PC-9 (cell line): ENCODE measurements at regions of chr16 and their contacts with region 1.

Region 1: GRCh38 chr16:56789360-56789759 is 59.4 kb downstream of the NUP93 start:
- DNase-seq: peak; percentile 55
- H3K4me3 ChIP-seq: no peak overlapping the region
- H3K27ac ChIP-seq: no peak overlapping the region
- H3K4me1 ChIP-seq: no peaks in the 10 kb centered on the region
- H3K27me3 ChIP-seq: no peaks in the 10 kb centered on the region
- CTCF ChIP-seq: peak; percentile 59

Region 2: GRCh38 chr16:56576585-56577293 is 212.6 kb before region 1 on chr16:
- CTCF ChIA-PET with region 1: no interaction called
- POLR2A ChIA-PET with region 1: no interaction called
- intact Hi-C with region 1: loop called (anchors 1 kb)
- DNase-seq: peak; percentile 92 to 95
- H3K4me3 ChIP-seq: no peak overlapping the region
- H3K27ac ChIP-seq: peak overlapping the region; percentile 75
- H3K4me1 ChIP-seq: peaks cover 14% of the 10 kb centered on the region
- H3K27me3 ChIP-seq: no peaks in the 10 kb centered on the region
- CTCF ChIP-seq: peak; percentile 91

Region 3: DNA sequence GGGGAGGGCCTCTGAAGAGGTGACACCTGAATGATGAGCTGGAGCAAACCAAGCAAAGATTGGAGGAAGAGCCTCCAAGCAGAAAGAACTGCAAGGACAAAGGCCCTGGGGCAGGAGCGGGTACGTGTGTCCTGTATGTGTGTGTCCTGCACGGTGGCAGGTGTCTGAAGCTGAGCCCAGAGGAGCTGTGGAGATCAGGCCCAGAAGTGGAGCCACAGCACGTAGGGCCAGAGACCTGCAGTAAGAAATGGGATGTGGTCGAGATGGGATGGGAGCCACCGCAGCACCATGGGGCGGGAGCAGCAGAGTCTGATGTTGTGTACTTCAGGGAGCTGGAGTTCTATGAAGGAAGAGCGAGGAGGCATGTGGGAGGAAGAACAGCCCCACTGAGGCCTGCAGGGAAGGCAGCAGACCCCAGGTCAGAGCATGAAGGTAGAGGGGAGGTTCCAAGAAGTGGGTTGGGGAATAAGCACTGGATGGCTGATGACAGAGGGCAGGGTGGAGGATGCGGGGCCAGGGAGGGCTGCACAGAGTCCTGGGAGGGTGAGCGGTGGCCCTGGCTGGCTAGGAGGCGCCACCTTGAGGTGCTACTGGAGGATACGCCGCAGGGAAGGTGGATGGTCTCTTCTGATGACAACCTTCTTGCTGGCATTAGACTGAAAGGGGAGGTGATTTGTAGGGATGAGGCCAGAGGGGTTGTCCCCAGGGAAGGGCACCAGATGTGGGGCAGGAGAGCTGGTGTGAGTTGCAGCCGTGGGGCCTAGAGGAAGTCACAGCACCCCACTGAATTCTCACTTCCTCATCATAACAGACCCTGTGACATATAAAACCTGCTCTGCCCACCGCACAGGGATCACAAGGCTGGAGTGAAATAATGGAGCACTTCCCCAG is 161.8 kb after region 1 on chr16:
- CTCF ChIA-PET with region 1: no interaction called
- POLR2A ChIA-PET with region 1: no interaction called
- intact Hi-C with region 1: loop called (anchors 5 kb)
- DNase-seq: peak in 1 of 2 experiments; percentile 33
- H3K4me3 ChIP-seq: no peak overlapping the region
- H3K27ac ChIP-seq: no peak overlapping the region
- H3K4me1 ChIP-seq: no peaks in the 10 kb centered on the region
- H3K27me3 ChIP-seq: no peaks in the 10 kb centered on the region
- CTCF ChIP-seq: peak; percentile 52; the same call in 1 of the 2 replicates